B cell (primary cell): ENCODE measurements at regions of chr4 and their contacts with region 1.

Region 1: GRCh38 chr4:140359562-140360427 is 13.7 kb upstream of the SCOC start:
- DNase-seq: peak; percentile 84
- ATAC-seq: peak; percentile 90
- H3K4me3 ChIP-seq: no peak overlapping the region
- H3K4me3 Mint-ChIP-seq: no peak overlapping the region
- H3K27ac ChIP-seq: no peak overlapping the region
- H3K27ac Mint-ChIP-seq: no peak overlapping the region
- H3K4me1 ChIP-seq: peaks cover 0 to 3% of the 10 kb centered on the region in 2 donors
- H3K4me1 Mint-ChIP-seq: peaks cover 7% of the 10 kb centered on the region
- H3K27me3 ChIP-seq: peaks cover 0 to 2% (median 0%) of the 10 kb centered on the region in 4 experiments
- H3K27me3 Mint-ChIP-seq: peaks cover 12% of the 10 kb centered on the region
- CTCF ChIP-seq: peak; percentile 98

Region 2: DNA sequence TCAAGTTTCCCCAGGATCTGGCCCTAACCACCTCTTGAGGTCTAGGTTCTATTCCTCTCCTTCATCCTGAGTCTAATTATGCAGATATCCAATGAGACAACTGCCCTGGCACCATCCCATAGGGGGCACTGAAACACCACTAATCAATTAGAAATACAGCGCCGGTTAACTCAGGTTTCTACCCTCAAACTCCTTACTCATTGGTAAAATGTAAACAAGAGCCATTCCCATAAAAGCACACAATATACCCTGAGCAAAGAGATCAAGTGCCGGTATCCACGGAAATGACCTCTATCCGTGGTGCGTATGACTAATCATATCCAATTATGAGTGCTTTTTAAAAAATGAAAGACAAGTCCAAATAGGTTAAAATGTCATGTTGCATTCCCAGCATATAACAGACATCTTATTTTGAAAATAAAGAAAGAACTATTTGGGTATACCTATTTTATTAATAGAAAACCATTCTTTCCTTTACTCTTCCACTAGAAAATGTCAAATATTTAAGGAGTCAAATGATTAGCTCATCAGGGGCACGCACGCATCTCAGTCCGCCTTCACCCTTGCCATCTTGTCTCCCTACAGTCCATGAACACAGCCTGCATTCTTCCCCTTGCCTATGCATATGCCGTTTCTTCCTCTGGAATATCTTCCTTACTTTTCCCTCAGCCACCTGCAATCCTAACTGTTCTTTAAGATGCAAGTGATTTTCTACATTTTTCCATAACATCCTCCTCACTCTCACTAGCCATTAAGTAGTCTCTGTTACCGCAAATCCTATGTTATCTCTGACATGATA is 346.9 kb before region 1 on chr4:
- CTCF ChIA-PET with region 1: interaction called, 37 read pairs
- POLR2A ChIA-PET with region 1: no interaction called
- intact Hi-C with region 1: no loop called
- DNase-seq: peak; percentile 75
- ATAC-seq: peak; percentile 87
- H3K4me3 ChIP-seq: no peak overlapping the region
- H3K4me3 Mint-ChIP-seq: no peak overlapping the region
- H3K27ac ChIP-seq: no peak overlapping the region
- H3K27ac Mint-ChIP-seq: no peak overlapping the region
- H3K4me1 ChIP-seq: peaks cover 0 to 5% of the 10 kb centered on the region in 2 donors
- H3K4me1 Mint-ChIP-seq: peaks cover 7% of the 10 kb centered on the region
- H3K27me3 ChIP-seq: peaks cover 0 to 4% (median 2%) of the 10 kb centered on the region in 4 experiments
- H3K27me3 Mint-ChIP-seq: peaks cover 15% of the 10 kb centered on the region
- CTCF ChIP-seq: peak; percentile 77

Region 3: GRCh38 chr4:140373328-140374129 is 13.7 kb after region 1 on chr4 and contains the start of gene SCOC:
- CTCF ChIA-PET with region 1: interaction called, 76 read pairs
- POLR2A ChIA-PET with region 1: no interaction called
- intact Hi-C with region 1: loop called (anchors 1 kb)
- DNase-seq: peak; percentile 97
- ATAC-seq: peak; percentile 95
- H3K4me3 ChIP-seq: peak within 1 kb of the TSS; percentile 54 to 98 (median 93)
- H3K4me3 Mint-ChIP-seq: peak within 1 kb of the TSS; percentile 86
- H3K27ac ChIP-seq: peak within 1 kb of the TSS; percentile 74 to 86
- H3K27ac Mint-ChIP-seq: peak within 1 kb of the TSS; percentile 64
- H3K4me1 ChIP-seq: peaks cover 14 to 16% of the 10 kb centered on the region in 2 donors
- H3K4me1 Mint-ChIP-seq: peaks cover 25% of the 10 kb centered on the region
- H3K27me3 ChIP-seq: no peaks in the 10 kb centered on the region
- H3K27me3 Mint-ChIP-seq: no peaks in the 10 kb centered on the region
- CTCF ChIP-seq: no peak
- total RNA-seq, gene SCOC: 18.4 and 19.2 TPM in 2 replicates

Region 4: DNA sequence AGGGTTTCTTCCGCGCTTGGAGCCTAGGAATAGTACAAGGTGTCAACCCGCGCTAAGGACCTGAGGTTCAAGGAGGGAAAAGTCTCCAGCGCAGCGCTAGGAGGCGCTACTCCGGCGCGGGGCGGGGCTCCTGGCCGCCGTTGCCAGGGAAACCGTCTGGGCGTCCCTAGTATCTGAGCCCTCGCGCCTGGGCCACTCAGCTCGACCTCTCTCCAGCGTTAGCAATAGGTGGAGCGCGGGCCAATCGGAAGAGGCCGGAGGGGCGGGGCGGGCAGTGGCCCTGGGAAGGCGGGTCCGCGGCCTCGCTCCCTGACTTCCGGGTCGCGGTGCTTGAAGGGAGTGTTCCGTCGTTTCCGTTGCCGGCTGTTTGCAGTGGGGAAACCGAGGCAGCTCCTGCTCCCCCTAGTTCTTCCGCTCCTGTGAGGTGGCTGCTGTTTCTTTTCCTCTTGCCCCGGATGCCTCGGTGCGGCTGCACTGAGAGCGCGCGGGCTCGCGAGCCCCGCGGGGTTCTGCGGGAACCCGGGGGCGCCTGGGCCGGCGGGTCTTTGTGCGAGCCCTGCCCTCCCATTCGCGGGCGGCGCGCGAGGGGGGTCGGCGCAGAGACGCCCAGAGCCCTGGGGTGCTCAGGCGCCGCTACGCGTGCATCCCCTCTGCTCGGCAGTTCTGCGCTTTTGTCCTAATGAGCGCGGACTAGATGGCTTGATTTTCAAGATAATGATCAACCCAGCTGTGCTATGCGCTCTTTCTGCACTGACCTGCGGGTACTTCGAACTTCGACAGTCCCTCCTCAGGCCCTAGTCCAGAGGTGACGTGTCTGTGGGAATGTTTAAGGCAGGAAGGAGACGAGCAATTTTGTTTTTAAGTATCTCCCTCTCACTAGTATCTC is 164.3 kb after region 1 on chr4 and contains the start of gene ELMOD2:
- CTCF ChIA-PET with region 1: interaction called, 11 read pairs
- POLR2A ChIA-PET with region 1: no interaction called
- intact Hi-C with region 1: no loop called
- DNase-seq: peak; percentile 98
- ATAC-seq: peak; percentile 99
- H3K4me3 ChIP-seq: peak within 1 kb of the TSS; percentile 65 to 89 (median 78)
- H3K4me3 Mint-ChIP-seq: peak within 1 kb of the TSS; percentile 91
- H3K27ac ChIP-seq: peak within 1 kb of the TSS; percentile 59 to 71
- H3K27ac Mint-ChIP-seq: peak within 1 kb of the TSS; percentile 86
- H3K4me1 ChIP-seq: peaks cover 12 to 13% of the 10 kb centered on the region in 2 donors
- H3K4me1 Mint-ChIP-seq: peaks cover 16% of the 10 kb centered on the region
- H3K27me3 ChIP-seq: no peaks in the 10 kb centered on the region
- H3K27me3 Mint-ChIP-seq: no peaks in the 10 kb centered on the region
- CTCF ChIP-seq: peak; percentile 92
- total RNA-seq, gene ELMOD2: 23.4 and 25.3 TPM in 2 replicates

Region 5: DNA sequence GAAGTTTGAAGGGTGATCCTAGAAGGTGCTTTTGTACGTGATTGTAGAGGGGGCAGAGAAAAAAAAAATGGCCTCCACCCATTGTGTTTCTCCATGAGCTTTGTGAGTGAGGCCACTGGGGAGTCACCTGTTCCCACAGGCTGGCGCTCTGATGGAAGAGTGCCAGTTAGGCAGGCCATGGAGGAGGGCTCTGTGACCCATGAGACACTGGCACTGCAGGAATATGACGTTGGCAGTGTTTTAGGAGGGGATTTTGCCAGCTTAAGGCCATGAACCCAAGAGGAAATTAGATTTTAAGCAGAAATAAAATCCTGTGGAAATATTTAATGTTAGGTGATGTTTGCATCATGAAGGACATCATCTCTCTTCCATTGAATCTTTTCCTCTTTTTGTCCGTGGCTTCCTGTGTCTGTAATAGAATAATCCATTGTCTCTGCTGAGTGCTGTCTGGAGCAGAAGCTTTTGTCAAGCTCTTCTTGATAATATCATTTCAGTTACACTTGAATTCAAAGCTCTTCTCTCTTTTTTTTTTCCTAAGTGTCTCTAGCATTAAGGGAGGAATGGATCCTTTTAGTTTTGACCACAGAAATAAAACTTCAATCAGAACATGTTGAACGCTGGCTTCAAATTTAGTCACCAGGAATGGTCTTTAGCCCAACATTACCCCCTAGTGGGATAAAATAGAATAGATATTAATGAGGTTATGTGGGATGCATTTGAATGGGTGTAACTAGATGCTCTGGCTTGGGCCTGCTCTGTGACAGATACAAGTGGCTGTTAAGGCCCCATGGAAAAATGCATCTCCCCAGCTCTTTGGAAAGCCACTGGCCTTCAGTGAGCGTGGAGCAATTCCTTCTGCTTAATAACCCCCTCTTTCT is 250.0 kb after region 1 on chr4:
- CTCF ChIA-PET with region 1: interaction called, 61 read pairs
- POLR2A ChIA-PET with region 1: no interaction called
- intact Hi-C with region 1: loop called (anchors 1 kb)
- DNase-seq: peak; percentile 57
- ATAC-seq: peak; percentile 68
- H3K4me3 ChIP-seq: no peak overlapping the region
- H3K4me3 Mint-ChIP-seq: no peak overlapping the region
- H3K27ac ChIP-seq: no peak overlapping the region
- H3K27ac Mint-ChIP-seq: no peak overlapping the region
- H3K4me1 ChIP-seq: peaks cover 0 to 6% of the 10 kb centered on the region in 2 donors
- H3K4me1 Mint-ChIP-seq: peaks cover 7% of the 10 kb centered on the region
- H3K27me3 ChIP-seq: no peaks in the 10 kb centered on the region
- H3K27me3 Mint-ChIP-seq: peaks cover 15% of the 10 kb centered on the region
- CTCF ChIP-seq: peak; percentile 76

Region 6: GRCh38 chr4:140861359-140862176 is 501.8 kb after region 1 on chr4:
- CTCF ChIA-PET with region 1: interaction called, 47 read pairs
- POLR2A ChIA-PET with region 1: no interaction called
- intact Hi-C with region 1: no loop called
- DNase-seq: peak; percentile 76
- ATAC-seq: peak; percentile 60
- H3K4me3 ChIP-seq: no peak overlapping the region
- H3K4me3 Mint-ChIP-seq: no peak overlapping the region
- H3K27ac ChIP-seq: no peak overlapping the region
- H3K27ac Mint-ChIP-seq: no peak overlapping the region
- H3K4me1 ChIP-seq: peaks cover 3 to 9% of the 10 kb centered on the region in 2 donors
- H3K4me1 Mint-ChIP-seq: peaks cover 15% of the 10 kb centered on the region
- H3K27me3 ChIP-seq: peaks cover 0 to 3% (median 0%) of the 10 kb centered on the region in 4 experiments
- H3K27me3 Mint-ChIP-seq: peaks cover 9% of the 10 kb centered on the region
- CTCF ChIP-seq: peak; percentile 87